Activated CD4-positive, alpha-beta T cell treated with anti-CD3 and anti-CD28 coated beads for 36 hours (primary cell): ENCODE measurements at regions of chr3 and their contacts with region 1.

Region 1: DNA sequence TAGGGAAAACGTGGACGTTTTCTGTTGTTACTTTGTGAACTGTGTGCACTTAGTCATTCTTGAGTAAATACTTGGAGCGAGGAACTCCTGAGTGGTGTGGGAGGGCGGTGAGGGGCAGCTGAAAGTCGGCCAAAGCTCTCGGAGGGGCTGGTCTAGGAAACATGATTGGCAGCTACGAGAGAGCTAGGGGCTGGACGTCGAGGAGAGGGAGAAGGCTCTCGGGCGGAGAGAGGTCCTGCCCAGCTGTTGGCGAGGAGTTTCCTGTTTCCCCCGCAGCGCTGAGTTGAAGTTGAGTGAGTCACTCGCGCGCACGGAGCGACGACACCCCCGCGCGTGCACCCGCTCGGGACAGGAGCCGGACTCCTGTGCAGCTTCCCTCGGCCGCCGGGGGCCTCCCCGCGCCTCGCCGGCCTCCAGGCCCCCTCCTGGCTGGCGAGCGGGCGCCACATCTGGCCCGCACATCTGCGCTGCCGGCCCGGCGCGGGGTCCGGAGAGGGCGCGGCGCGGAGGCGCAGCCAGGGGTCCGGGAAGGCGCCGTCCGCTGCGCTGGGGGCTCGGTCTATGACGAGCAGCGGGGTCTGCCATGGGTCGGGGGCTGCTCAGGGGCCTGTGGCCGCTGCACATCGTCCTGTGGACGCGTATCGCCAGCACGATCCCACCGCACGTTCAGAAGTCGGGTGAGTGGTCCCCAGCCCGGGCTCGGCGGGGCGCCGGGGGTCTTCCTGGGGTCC is at the start of gene TGFBR2:
- DNase-seq: peak; percentile 94
- ATAC-seq: peak; percentile 70
- H3K4me3 Mint-ChIP-seq: peak within 1 kb of the TSS; percentile 99
- H3K27ac Mint-ChIP-seq: peak within 1 kb of the TSS; percentile 95
- H3K4me1 Mint-ChIP-seq: peaks cover 60% of the 10 kb centered on the region
- H3K27me3 Mint-ChIP-seq: no peaks in the 10 kb centered on the region
- total RNA-seq, gene TGFBR2: 45.5 to 46.6 TPM

Region 2: GRCh38 chr3:30347679-30348216 is 258.7 kb before region 1 on chr3:
- CTCF ChIA-PET with region 1: interaction called, 3 read pairs
- POLR2A ChIA-PET with region 1: interaction called, 5 read pairs
- intact Hi-C with region 1: loop called (anchors 2 to 5 kb)
- DNase-seq: peak; percentile 67
- ATAC-seq: peak; percentile 97
- H3K4me3 Mint-ChIP-seq: no peak overlapping the region
- H3K27ac Mint-ChIP-seq: peak overlapping the region; percentile 82
- H3K4me1 Mint-ChIP-seq: peaks cover 85% of the 10 kb centered on the region
- H3K27me3 Mint-ChIP-seq: peaks cover 8% of the 10 kb centered on the region

Region 3: DNA sequence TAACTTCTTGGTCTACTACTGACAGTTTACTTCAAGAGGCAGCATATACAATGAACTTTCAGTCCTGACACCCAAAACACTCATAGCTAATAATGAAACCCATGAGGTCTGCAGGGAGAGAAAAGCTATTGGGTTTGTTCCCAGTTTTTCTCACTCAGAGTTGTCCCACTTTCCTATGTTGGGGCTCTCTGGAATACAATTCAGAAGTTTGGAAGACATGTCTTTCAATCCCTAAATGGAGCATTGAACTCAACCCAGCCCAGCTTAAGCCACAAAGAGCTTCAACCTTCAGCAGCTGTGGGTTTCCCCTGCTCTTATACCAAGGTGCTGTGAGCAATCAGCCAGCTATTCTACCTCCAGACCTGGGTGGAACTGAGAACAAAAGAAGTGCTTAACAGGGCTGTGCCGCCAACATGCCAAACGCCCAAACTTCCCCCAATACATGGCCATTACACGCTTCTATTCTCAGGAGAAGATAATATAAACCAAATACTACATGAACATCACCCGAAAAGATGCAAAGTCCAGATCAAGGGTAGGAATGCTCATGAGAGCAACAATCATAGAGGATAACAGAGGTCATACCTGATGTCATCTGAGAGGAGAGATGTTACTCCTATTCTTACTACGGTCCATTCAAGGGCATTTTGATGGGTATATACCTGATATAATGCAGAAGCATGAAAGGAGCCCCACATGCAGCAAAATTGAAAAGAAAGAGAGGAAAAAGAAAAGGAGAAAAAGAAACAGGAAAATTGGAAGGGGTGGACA is 131.2 kb before region 1 on chr3:
- CTCF ChIA-PET with region 1: no interaction called
- POLR2A ChIA-PET with region 1: no interaction called
- intact Hi-C with region 1: loop called (anchors 2 to 5 kb)
- DNase-seq: peak; percentile 60
- ATAC-seq: peak; percentile 83
- H3K4me3 Mint-ChIP-seq: no peak overlapping the region
- H3K27ac Mint-ChIP-seq: peak overlapping the region; percentile 22
- H3K4me1 Mint-ChIP-seq: peaks cover 52% of the 10 kb centered on the region
- H3K27me3 Mint-ChIP-seq: no peaks in the 10 kb centered on the region

Region 4: DNA sequence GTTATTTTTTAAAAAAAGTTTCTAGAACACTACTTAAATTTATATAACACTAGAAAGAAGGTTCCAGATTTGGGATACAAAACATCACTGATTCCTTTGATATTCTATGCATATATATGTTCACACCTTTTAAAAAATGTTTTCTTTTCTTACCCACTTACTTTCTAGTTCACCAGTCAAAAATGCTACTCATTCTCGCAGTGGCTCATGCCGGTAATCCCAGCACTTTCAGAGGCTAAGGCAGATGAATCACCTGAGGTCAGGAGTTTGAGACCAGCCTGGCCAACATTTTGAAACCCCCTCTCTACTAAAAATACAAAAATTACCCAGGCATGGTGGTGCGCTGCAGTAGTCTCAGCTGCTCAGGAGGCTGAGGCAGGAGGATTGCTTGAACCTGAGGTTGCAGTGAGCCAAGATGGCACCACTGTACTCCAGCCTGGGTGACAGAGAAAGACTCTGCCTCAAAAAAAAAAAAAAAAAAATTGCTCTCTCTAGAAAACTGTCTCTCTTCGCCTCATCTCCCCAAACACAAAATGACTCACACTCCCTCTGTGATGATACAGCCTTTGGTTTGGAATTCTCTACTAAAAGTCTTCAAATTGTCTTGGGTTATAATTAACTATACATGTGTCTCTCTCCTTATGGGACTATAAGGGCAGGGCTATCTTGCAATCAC is 52.7 kb before region 1 on chr3:
- CTCF ChIA-PET with region 1: no interaction called
- POLR2A ChIA-PET with region 1: no interaction called
- intact Hi-C with region 1: loop called in 1 of 2 experiments (anchors 5 kb)
- DNase-seq: peak; percentile 39
- ATAC-seq: peak; percentile 77
- H3K4me3 Mint-ChIP-seq: no peak overlapping the region
- H3K27ac Mint-ChIP-seq: no peak overlapping the region
- H3K4me1 Mint-ChIP-seq: peaks cover 32% of the 10 kb centered on the region
- H3K27me3 Mint-ChIP-seq: no peaks in the 10 kb centered on the region

Region 5: DNA sequence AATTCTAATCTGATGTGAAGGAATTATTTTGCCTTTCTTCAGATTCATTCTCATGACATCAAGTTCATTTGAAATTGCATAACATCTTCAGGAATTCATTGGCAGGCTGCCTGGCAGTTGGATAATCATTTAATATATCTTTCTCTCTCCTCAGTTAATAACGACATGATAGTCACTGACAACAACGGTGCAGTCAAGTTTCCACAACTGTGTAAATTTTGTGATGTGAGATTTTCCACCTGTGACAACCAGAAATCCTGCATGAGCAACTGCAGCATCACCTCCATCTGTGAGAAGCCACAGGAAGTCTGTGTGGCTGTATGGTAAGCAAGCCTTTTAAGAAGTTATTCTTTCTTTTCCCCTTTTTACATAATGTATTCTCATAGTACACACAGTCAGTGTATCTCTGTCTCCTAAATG is 38.1 kb after region 1 on chr3:
- CTCF ChIA-PET with region 1: interaction called, 5 read pairs
- POLR2A ChIA-PET with region 1: interaction called, 6 read pairs
- intact Hi-C with region 1: loop called (anchors 1 to 5 kb)
- DNase-seq: peak; percentile 74
- ATAC-seq: peak; percentile 62
- H3K4me3 Mint-ChIP-seq: peak overlapping the region; percentile 58
- H3K27ac Mint-ChIP-seq: peak overlapping the region; percentile 94
- H3K4me1 Mint-ChIP-seq: peaks cover 94% of the 10 kb centered on the region
- H3K27me3 Mint-ChIP-seq: no peaks in the 10 kb centered on the region

Region 6: DNA sequence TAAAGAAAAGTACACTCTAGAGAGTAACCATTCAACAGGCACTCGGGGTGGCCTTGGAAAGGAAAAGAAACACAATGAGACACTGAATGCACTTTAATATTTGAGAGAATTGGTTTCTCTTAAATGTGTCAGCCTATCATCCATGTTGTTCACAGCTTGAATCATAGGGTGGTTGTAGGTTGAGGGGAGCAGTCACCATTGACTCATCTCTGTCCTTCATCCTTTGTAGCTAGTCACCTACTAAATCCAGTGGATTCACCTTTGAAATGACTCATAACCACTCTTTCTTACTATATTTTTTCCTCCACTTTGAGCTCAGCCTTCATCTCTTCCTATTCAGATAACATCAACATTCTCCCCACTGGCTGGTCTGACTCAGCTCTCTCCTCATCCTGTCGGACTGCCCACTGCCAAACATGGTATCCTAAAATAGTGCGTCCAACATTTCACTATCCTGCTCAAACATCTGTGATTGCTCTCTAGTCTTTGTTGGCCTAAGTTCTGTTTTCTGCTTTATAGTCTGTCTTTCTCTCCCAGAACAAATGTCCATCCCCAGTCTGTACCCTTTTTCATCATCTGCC is 470.6 kb after region 1 on chr3:
- CTCF ChIA-PET with region 1: no interaction called
- POLR2A ChIA-PET with region 1: no interaction called
- intact Hi-C with region 1: loop called in 1 of 2 experiments (anchors 1 kb)
- DNase-seq: peak; percentile 68
- ATAC-seq: peak; percentile 98
- H3K4me3 Mint-ChIP-seq: no peak overlapping the region
- H3K27ac Mint-ChIP-seq: peak overlapping the region; percentile 52
- H3K4me1 Mint-ChIP-seq: peaks cover 26% of the 10 kb centered on the region
- H3K27me3 Mint-ChIP-seq: peaks cover 5% of the 10 kb centered on the region